Naive thymus-derived CD4-positive, alpha-beta T cell (primary cell): ENCODE measurements at regions of chr6 and their contacts with region 1.

Region 1: GRCh38 chr6:111483736-111484632 is 966 bp upstream of the REV3L start:
- DNase-seq: peak in 6 of 9 donors; percentile 80 to 89 (median 86)
- ATAC-seq: peak; percentile 79
- H3K4me3 ChIP-seq: peak overlapping the region; percentile 93
- H3K4me3 Mint-ChIP-seq: peak overlapping the region; percentile 96 to 100 (median 98)
- H3K27ac ChIP-seq: peak overlapping the region; percentile 99
- H3K27ac Mint-ChIP-seq: peak overlapping the region; percentile 95 to 99 (median 99)
- H3K4me1 ChIP-seq: peaks cover 14 to 29% of the 10 kb centered on the region in 2 donors
- H3K4me1 Mint-ChIP-seq: peaks cover 28 to 59% (median 52%) of the 10 kb centered on the region in 7 donors
- H3K27me3 ChIP-seq: no peaks in the 10 kb centered on the region
- H3K27me3 Mint-ChIP-seq: peaks cover 0 to 3% (median 0%) of the 10 kb centered on the region in 5 donors

Region 2: DNA sequence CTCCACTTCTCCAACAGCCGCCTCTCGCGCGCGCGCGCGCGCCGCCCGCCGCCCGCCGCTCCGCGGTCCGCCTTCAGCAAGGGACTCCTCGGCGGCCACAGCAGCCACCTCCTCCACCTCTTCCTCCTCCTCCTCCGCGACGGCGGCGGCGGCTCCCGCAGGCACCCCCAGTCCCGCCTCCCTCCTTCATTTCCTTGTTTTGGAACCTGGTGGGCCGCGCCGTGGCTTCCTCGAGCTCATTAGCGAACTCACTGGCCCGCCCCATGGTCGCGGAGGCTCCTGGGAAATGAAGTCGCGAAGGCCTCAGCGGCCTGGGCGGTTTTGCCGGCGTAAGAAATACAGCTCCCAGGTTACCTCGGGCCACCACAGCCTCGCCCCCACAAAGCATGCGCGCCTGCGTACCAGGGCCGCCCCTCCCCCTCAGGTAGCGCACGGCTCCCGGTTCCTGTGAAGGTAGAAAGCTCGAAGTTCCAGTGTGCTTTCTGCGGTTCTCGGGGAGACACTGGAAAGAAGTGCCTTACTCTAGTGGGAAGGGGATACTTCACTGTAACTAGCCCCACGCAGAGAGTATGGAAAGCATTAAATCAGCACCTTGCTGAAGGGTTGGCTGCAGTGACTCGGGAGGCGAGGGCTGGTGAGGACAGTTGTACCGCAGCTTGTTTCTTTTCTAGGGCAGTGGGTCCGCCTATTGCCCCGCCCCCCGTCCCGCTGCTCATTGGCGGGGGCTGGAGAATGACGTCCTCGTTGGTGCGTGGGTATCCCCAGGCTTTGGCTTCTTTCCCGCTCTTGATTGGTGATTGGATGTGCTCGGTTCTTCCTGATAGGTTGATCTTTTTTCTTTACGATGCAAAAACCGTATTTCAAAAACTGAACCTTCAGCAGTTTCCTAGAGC is 668.5 kb before region 1 on chr6 and contains the start of gene CDK19:
- CTCF ChIA-PET with region 1: no interaction called
- POLR2A ChIA-PET with region 1: interaction called, 5 read pairs
- intact Hi-C with region 1: loop called in 1 of 2 experiments (anchors 1 kb)
- DNase-seq: peak; percentile 94 to 99 (median 99)
- ATAC-seq: peak; percentile 87
- H3K4me3 ChIP-seq: peak within 1 kb of the TSS; percentile 97
- H3K4me3 Mint-ChIP-seq: peak within 1 kb of the TSS; percentile 94 to 100 (median 98)
- H3K27ac ChIP-seq: peak within 1 kb of the TSS; percentile 89
- H3K27ac Mint-ChIP-seq: peak within 1 kb of the TSS; percentile 89 to 100 (median 99)
- H3K4me1 ChIP-seq: peaks cover 11 to 15% of the 10 kb centered on the region in 2 donors
- H3K4me1 Mint-ChIP-seq: peaks cover 14 to 46% (median 26%) of the 10 kb centered on the region in 7 donors
- H3K27me3 ChIP-seq: no peaks in the 10 kb centered on the region
- H3K27me3 Mint-ChIP-seq: no peaks in the 10 kb centered on the region
- total RNA-seq, gene CDK19: 11.3 to 24.4 (median 21.0) TPM

Region 3: GRCh38 chr6:111087106-111087835 is 396.7 kb before region 1 on chr6 and contains the start of gene SLC16A10:
- CTCF ChIA-PET with region 1: no interaction called
- POLR2A ChIA-PET with region 1: interaction called, 3 read pairs
- intact Hi-C with region 1: loop called (anchors 1 to 5 kb)
- DNase-seq: peak; percentile 75 to 92 (median 90)
- ATAC-seq: peak; percentile 95
- H3K4me3 ChIP-seq: peak within 1 kb of the TSS; percentile 83
- H3K4me3 Mint-ChIP-seq: peak within 1 kb of the TSS; percentile 85 to 100 (median 97)
- H3K27ac ChIP-seq: peak within 1 kb of the TSS; percentile 80
- H3K27ac Mint-ChIP-seq: peak within 1 kb of the TSS; percentile 54 to 99 (median 96)
- H3K4me1 ChIP-seq: peaks cover 10 to 17% of the 10 kb centered on the region in 2 donors
- H3K4me1 Mint-ChIP-seq: peaks cover 20 to 54% (median 48%) of the 10 kb centered on the region in 7 donors
- H3K27me3 ChIP-seq: no peaks in the 10 kb centered on the region
- H3K27me3 Mint-ChIP-seq: peaks cover 0 to 24% (median 0%) of the 10 kb centered on the region in 5 donors
- total RNA-seq, gene SLC16A10: 1.6 to 27.7 (median 16.7) TPM

Region 4: DNA sequence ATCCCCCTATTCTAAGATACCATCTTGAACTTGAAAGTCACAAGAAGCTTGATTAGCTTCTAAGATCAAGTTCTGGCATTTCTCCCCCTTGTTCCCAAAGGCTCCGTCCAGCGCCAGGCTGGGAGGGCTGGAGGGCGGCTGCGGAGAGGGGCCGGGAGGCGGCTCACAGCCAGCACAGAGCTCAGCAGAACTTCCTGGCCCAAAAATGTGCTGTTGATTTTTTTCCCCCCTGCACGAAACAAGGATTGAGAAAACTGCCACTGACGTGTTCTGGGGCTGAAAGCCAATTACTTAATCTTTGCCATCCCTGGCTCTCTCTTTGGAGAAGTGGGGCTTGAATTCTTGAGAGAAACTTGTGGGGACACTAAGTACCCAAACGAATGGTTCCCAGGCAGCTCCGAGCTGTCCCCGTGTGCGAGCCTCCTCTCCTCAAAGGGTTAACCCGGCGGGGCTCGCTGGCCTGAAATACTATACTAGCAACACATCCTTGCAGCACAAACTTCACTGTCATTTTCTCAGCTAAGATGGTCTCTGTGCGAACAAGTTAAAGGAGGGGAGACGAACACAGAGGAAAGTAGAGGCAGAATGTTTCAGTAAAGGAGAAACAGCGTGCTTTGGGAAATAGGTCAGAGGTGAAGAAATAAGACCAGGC is 121.2 kb after region 1 on chr6:
- CTCF ChIA-PET with region 1: no interaction called
- POLR2A ChIA-PET with region 1: interaction called, 17 read pairs
- intact Hi-C with region 1: loop called (anchors 1 kb)
- DNase-seq: peak in 8 of 9 donors; percentile 12 to 60 (median 34)
- ATAC-seq: peak; percentile 56
- H3K4me3 ChIP-seq: peak overlapping the region; percentile 85
- H3K4me3 Mint-ChIP-seq: peak overlapping the region; percentile 89 to 97 (median 94)
- H3K27ac ChIP-seq: peak overlapping the region; percentile 84
- H3K27ac Mint-ChIP-seq: peak overlapping the region; percentile 90 to 98 (median 95)
- H3K4me1 ChIP-seq: peaks cover 13 to 15% of the 10 kb centered on the region in 2 donors
- H3K4me1 Mint-ChIP-seq: peaks cover 25 to 61% (median 58%) of the 10 kb centered on the region in 7 donors
- H3K27me3 ChIP-seq: no peaks in the 10 kb centered on the region
- H3K27me3 Mint-ChIP-seq: peaks cover 0 to 2% (median 0%) of the 10 kb centered on the region in 5 donors

Region 5: GRCh38 chr6:111668410-111668809 is 184.4 kb after region 1 on chr6:
- CTCF ChIA-PET with region 1: no interaction called
- POLR2A ChIA-PET with region 1: no interaction called
- intact Hi-C with region 1: no loop called
- DNase-seq: no peak
- ATAC-seq: no peak
- H3K4me3 ChIP-seq: no peak overlapping the region
- H3K4me3 Mint-ChIP-seq: no peak overlapping the region
- H3K27ac ChIP-seq: peak overlapping the region; percentile 30
- H3K27ac Mint-ChIP-seq: peak overlapping the region in 7 of 9 donors; percentile 12 to 85 (median 48)
- H3K4me1 ChIP-seq: no peaks in the 10 kb centered on the region
- H3K4me1 Mint-ChIP-seq: peaks cover 0 to 21% (median 4%) of the 10 kb centered on the region in 7 donors
- H3K27me3 ChIP-seq: no peaks in the 10 kb centered on the region
- H3K27me3 Mint-ChIP-seq: no peaks in the 10 kb centered on the region

Region 6: GRCh38 chr6:111793711-111794111 is 309.7 kb after region 1 on chr6:
- CTCF ChIA-PET with region 1: no interaction called
- POLR2A ChIA-PET with region 1: no interaction called
- intact Hi-C with region 1: no loop called
- DNase-seq: peak in 1 of 9 donors; percentile 32
- ATAC-seq: peak; percentile 83
- H3K4me3 ChIP-seq: peak overlapping the region; percentile 63
- H3K4me3 Mint-ChIP-seq: peak overlapping the region in 9 of 10 donors; percentile 51 to 79 (median 62)
- H3K27ac ChIP-seq: peak overlapping the region; percentile 53
- H3K27ac Mint-ChIP-seq: peak overlapping the region in 8 of 9 donors; percentile 46 to 91 (median 84)
- H3K4me1 ChIP-seq: peaks cover 68% of the 10 kb centered on the region in 2 donors
- H3K4me1 Mint-ChIP-seq: peaks cover 6 to 67% (median 9%) of the 10 kb centered on the region in 7 donors
- H3K27me3 ChIP-seq: no peaks in the 10 kb centered on the region
- H3K27me3 Mint-ChIP-seq: no peaks in the 10 kb centered on the region

Region 7: DNA sequence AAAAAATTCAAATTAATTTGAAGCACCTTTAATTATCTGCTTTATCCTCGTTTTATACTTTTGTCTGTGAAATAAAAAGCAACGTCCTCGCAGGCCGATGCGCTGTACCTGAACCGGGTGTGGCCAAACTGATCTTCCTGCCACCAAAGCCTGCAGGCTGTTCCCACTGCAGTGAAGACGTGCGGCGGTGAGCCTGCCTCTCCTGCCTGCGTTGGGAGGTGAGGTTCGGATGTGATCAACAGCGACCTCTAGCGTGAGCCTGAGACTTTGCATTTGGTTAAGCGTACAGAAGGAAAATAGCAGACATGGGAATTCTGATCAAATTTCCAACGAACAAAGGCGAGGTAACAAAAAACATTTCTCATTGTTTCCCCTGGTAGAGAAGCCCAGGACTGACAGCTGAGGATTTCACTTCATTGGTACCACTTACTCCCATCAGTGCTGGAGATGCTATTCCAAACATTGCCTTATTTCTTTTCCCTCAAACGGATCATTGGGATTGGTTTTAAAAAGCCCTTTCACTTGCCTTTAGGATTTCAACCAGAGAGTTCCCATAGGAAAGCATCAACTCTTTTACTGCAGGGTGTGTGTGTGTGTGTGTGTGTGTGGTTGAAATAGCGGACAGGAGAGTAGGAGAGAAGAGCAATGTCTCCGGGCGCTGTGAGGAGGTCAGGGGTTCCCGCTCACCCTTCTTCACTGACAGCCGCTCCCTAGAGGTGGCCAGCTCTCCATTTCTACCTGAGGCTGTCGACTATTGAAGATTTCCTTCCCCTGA is 513.3 kb after region 1 on chr6:
- CTCF ChIA-PET with region 1: no interaction called
- POLR2A ChIA-PET with region 1: interaction called, 3 read pairs
- intact Hi-C with region 1: loop called in 1 of 2 experiments (anchors 5 kb)
- DNase-seq: peak; percentile 60 to 82 (median 75)
- ATAC-seq: peak; percentile 89
- H3K4me3 ChIP-seq: peak overlapping the region; percentile 2
- H3K4me3 Mint-ChIP-seq: peak overlapping the region; percentile 58 to 91 (median 83)
- H3K27ac ChIP-seq: peak overlapping the region; percentile 55
- H3K27ac Mint-ChIP-seq: peak overlapping the region; percentile 44 to 97 (median 93)
- H3K4me1 ChIP-seq: peaks cover 19 to 45% of the 10 kb centered on the region in 2 donors
- H3K4me1 Mint-ChIP-seq: peaks cover 35 to 63% (median 50%) of the 10 kb centered on the region in 7 donors
- H3K27me3 ChIP-seq: no peaks in the 10 kb centered on the region
- H3K27me3 Mint-ChIP-seq: no peaks in the 10 kb centered on the region